Activated T-helper 1 cell treated with anti-CD3 and anti-CD28 coated beads, Interleukin-12 subunit alpha, Interleukin-12 subunit beta, Interleukin-2, Interleukin-4 antibody, amounts not matched to agents 30 ng/mL and 10 ng/mL and 1 ng/mL, durations not matched to agents 14 hours and 24 hours and 36 hours (primary cell): ENCODE measurements at regions of chr19 and their contacts with region 1.

Region 1: GRCh38 chr19:55503502-55504251 is 15.4 kb downstream of the SSC5D start:
- DNase-seq: peak; percentile 89
- H3K4me3 Mint-ChIP-seq: peak overlapping the region; percentile 78
- H3K27ac Mint-ChIP-seq: peak overlapping the region; percentile 82
- H3K4me1 Mint-ChIP-seq: peaks cover 24% of the 10 kb centered on the region
- H3K27me3 Mint-ChIP-seq: peaks cover 4% of the 10 kb centered on the region

Region 2: DNA sequence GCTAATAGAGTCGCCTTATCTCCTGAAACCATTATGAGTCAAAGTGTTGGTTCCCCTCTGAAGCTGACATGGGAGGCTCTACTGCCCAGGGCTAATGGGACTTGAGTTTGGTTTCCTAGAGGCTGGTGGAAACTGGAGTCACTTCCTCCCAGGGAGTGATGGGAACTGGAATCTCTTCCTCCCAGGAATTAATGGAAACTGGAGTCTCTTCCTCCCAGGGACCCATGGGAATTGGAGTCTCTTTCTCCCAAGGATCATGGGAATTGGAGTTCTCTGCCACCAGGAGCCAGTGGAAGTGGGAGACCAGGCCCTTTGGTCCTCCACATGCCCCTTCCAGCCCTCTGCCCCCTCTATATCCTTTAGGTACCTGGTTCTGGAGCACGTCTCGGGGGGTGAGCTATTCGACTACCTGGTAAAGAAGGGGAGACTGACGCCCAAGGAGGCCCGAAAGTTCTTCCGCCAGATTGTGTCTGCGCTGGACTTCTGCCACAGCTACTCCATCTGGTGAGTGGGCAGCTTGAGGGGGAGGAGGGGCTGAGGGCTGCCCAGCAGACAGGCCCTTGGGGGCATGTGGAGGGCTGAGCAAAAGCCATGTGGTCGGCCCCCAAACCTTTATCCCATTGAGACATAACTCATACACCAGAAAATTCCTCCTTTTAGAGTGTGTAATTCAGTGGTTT is 214.4 kb before region 1 on chr19:
- intact Hi-C with region 1: loop called (anchors 2 kb)
- DNase-seq: no peak
- H3K4me3 Mint-ChIP-seq: no peak overlapping the region
- H3K27ac Mint-ChIP-seq: no peak overlapping the region
- H3K4me1 Mint-ChIP-seq: peaks cover 5% of the 10 kb centered on the region
- H3K27me3 Mint-ChIP-seq: peaks cover 3% of the 10 kb centered on the region

Region 3: GRCh38 chr19:55341171-55341588 is 162.5 kb before region 1 on chr19:
- intact Hi-C with region 1: no loop called
- DNase-seq: peak; percentile 56
- H3K4me3 Mint-ChIP-seq: peak overlapping the region; percentile 86
- H3K27ac Mint-ChIP-seq: peak overlapping the region; percentile 94
- H3K4me1 Mint-ChIP-seq: peaks cover 14% of the 10 kb centered on the region
- H3K27me3 Mint-ChIP-seq: peaks cover 9% of the 10 kb centered on the region

Region 4: DNA sequence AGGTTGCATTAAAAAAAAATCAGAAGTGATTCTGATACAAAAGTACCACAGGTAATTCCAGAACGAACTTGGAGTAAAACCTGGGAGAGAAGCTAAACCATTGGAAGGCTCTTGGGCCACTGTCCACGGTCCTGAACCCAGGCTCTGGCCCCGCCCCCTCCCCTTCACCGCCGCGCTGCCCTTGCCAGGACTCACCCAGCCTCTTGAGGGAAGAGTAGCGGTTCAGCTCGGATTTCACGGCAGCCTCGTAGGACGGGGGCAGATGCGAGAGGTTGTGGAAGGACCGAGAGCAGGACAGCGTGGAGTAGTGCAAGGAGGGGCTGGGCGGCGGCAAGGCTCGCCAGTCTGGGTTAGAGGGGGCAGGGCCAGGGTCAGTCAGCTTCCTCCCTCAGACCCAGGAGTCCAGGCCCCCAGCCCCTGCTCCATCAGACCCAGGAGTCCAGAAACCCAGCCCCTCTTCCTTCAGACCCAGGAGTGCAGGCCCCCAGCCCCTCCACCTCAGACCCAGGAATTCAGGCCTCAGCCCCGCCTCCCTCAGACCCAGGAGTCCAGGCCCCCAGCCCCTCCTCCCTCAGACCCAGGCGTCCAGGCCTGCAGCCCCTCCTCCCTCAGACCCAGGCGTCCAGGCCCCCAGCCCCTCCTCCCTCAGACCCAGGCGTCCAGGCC is 66.1 kb before region 1 on chr19:
- intact Hi-C with region 1: no loop called
- DNase-seq: no peak
- H3K4me3 Mint-ChIP-seq: no peak overlapping the region
- H3K27ac Mint-ChIP-seq: no peak overlapping the region
- H3K4me1 Mint-ChIP-seq: peaks cover 17% of the 10 kb centered on the region
- H3K27me3 Mint-ChIP-seq: peaks cover 34% of the 10 kb centered on the region

Region 5: GRCh38 chr19:55467236-55468053 is 36.2 kb before region 1 on chr19:
- intact Hi-C with region 1: loop called (anchors 1 kb)
- DNase-seq: peak; percentile 62
- H3K4me3 Mint-ChIP-seq: no peak overlapping the region
- H3K27ac Mint-ChIP-seq: no peak overlapping the region
- H3K4me1 Mint-ChIP-seq: peaks cover 5% of the 10 kb centered on the region
- H3K27me3 Mint-ChIP-seq: peaks cover 2% of the 10 kb centered on the region

Region 6: DNA sequence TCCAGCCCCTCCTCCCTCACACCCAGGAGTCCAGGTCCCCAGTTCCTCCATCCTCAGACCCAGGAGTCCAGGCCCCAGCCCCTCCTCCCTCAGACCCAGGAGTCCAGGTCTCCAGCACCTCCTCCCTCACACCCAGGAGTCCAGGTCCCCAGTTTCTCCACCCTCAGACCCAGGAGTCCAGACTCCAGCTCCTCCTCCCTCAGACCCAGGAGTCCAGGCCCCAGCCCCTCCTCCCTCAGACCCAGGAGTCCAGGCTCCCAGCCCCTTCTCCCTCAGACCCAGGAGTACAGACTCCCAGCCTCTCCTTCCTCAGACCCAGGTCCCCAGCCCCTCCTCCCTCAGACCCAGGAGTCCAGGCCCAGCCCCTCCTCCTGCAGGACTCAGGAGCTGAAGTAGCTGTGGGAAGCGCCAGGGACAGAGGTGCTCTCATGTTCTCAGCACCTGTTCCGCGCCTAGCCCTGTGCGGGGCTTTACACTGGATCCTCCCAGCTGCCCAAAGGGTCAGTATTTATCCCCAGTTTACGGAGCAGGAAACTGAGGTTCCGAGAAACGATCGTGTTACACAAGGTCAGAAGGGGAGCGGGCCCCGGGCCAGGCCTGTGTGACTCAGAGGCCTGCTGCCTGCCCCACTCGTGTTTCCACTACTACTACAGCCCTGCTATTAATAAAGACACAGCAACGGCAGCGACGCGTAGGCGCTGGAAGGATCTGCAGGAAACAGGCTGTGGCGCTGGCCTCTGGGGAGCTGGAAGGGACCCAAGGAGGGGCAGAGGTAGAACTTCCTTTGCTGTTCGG is 43.3 kb after region 1 on chr19:
- intact Hi-C with region 1: no loop called
- DNase-seq: no peak
- H3K4me3 Mint-ChIP-seq: no peak overlapping the region
- H3K27ac Mint-ChIP-seq: no peak overlapping the region
- H3K4me1 Mint-ChIP-seq: peaks cover 5% of the 10 kb centered on the region
- H3K27me3 Mint-ChIP-seq: peaks cover 8% of the 10 kb centered on the region

Region 7: GRCh38 chr19:55877211-55877610 is 373.5 kb after region 1 on chr19:
- intact Hi-C with region 1: no loop called
- DNase-seq: no peak
- H3K4me3 Mint-ChIP-seq: no peak overlapping the region
- H3K27ac Mint-ChIP-seq: no peak overlapping the region
- H3K4me1 Mint-ChIP-seq: no peaks in the 10 kb centered on the region
- H3K27me3 Mint-ChIP-seq: no peaks in the 10 kb centered on the region